IMR-90 (cell line): ENCODE measurements at regions of chr1 and their contacts with region 1.

Region 1: GRCh38 chr1:223233410-223234169 is 90.5 kb upstream of the TLR5 start:
- DNase-seq: peak; percentile 92
- ATAC-seq: peak; percentile 65
- H3K4me3 ChIP-seq: no peak overlapping the region
- H3K27ac ChIP-seq: peak overlapping the region; percentile 52; the same call in 1 of the 2 replicates
- H3K4me1 ChIP-seq: peaks cover 20% of the 10 kb centered on the region
- H3K27me3 ChIP-seq: no peaks in the 10 kb centered on the region
- CTCF ChIP-seq: no peak
- POLR2A ChIP-seq: no peak
- RAD21 ChIP-seq: no peak; the same call in 1 of the 2 replicates

Region 2: DNA sequence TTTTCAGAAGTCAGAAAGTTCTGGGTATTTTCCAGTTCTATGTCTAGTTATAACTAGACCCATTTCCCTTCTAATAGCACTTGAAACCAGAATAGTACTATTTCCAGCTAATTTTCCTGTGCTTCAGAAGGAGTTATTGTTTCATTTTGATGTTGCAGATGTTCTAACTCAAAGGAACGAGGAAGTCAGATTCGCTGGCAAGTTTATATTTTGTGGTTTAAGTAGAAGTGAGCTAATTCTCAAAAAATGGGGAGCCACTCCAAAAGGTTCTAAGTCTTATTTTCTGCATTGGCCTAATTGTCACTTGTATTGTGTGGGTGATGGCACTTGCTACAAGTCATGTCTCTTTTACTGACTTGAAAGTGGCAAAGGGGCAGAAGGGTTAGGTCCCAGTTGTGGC is 177.7 kb after region 1 on chr1:
- CTCF ChIA-PET with region 1: no interaction called
- POLR2A ChIA-PET with region 1: no interaction called
- dilution Hi-C with region 1: no loop called
- in situ Hi-C with region 1: no loop called
- intact Hi-C with region 1: loop called (anchors 5 kb)
- DNase-seq: peak; percentile 88
- ATAC-seq: peak; percentile 89
- H3K4me3 ChIP-seq: no peak overlapping the region
- H3K27ac ChIP-seq: peak overlapping the region; percentile 72; the same call in 1 of the 2 replicates
- H3K4me1 ChIP-seq: peaks cover 12% of the 10 kb centered on the region
- H3K27me3 ChIP-seq: no peaks in the 10 kb centered on the region
- CTCF ChIP-seq: no peak
- POLR2A ChIP-seq: no peak
- RAD21 ChIP-seq: peak; percentile 3; the same call in 1 of the 2 replicates